ENCODE measurements at regions of chr1 and their contacts with region 1.

Region 1: GRCh38 chr1:26889551-26890466 is at the start of gene GPN2:
- DNase-seq: peak; percentile 71 to 75
- ATAC-seq: peak; percentile 94 to 96
- H3K4me3 ChIP-seq: peak within 1 kb of the TSS; percentile 88
- H3K27ac ChIP-seq: peak within 1 kb of the TSS; percentile 88 to 90
- H3K4me1 ChIP-seq: peaks cover 9% of the 10 kb centered on the region; the same call in 2 of the 3 replicates
- CTCF ChIP-seq: no peak
- EP300 ChIP-seq: no peak
- POLR2A ChIP-seq: peak; percentile 46
- RAD21 ChIP-seq: no peak
- polyA plus RNA-seq, gene GPN2: 18.1 and 23.6 TPM in 2 replicates

Region 2: GRCh38 chr1:26811057-26811456 is 78.8 kb before region 1 on chr1:
- CTCF ChIA-PET with region 1: interaction called, 10 read pairs
- POLR2A ChIA-PET with region 1: no interaction called
- DNase-seq: no peak
- ATAC-seq: no peak
- H3K4me3 ChIP-seq: no peak overlapping the region
- H3K27ac ChIP-seq: no peak overlapping the region; a peak in 1 of 6 replicates
- H3K4me1 ChIP-seq: no peaks in the 10 kb centered on the region; the same call in 2 of the 3 replicates
- CTCF ChIP-seq: no peak
- EP300 ChIP-seq: no peak
- POLR2A ChIP-seq: no peak
- RAD21 ChIP-seq: no peak

Region 3: DNA sequence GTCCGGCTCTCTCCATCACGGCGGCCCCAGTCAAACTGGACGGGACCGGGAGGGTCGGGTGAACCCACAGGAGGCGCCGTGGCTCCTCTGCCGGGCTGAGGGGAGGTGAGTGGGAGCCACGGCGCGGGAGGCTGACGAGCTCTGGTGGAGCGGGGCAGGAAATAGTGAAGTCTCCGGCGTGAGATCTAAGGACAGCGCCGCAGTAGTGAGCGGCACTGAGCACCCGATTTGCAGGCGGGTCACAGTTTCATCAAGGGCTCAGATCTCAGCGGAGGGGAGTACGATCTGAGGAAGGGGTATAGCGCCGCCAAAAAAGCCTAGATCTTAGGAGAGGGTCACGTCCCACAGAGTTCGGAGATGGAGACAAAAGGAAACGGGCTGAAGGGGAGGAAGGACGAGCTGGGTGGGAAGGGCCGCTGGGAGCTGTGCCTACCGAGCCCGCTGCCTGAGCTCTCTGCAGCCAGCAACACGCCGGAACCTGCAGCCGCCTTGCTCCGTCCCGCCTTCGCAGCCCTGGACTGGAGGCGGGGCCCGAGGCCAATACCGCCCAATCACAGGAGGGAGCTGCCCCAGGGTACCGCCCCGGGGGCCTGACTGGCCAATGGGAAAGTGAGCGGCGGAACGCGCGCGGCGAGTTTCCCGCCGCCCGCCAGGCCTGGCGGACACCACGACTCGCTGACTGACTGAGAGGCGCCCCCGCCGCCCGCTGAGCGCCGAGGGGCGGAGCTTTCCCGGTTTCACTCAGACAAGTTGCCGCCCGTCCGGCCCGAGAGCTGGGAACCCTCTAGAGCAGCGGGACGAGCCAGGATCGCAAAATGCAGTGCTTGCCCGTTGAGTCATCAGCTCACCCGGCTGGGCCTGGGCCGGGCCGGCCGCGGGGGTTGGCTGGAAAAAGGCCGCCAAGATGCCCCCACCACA is 24.9 kb before region 1 on chr1:
- CTCF ChIA-PET with region 1: interaction called, 7 read pairs
- POLR2A ChIA-PET with region 1: interaction called, 10 read pairs
- DNase-seq: peak; percentile 65 to 96
- ATAC-seq: peak; percentile 76 to 89
- H3K4me3 ChIP-seq: peak overlapping the region; percentile 66
- H3K27ac ChIP-seq: peak overlapping the region; percentile 99 to 100
- H3K4me1 ChIP-seq: peaks cover 30% of the 10 kb centered on the region
- CTCF ChIP-seq: no peak
- EP300 ChIP-seq: no peak
- POLR2A ChIP-seq: peak; percentile 98
- RAD21 ChIP-seq: no peak

Region 4: GRCh38 chr1:26874896-26875295 is 14.9 kb before region 1 on chr1:
- CTCF ChIA-PET with region 1: interaction called, 11 read pairs
- POLR2A ChIA-PET with region 1: interaction called, 3 read pairs
- DNase-seq: no peak
- ATAC-seq: no peak
- H3K4me3 ChIP-seq: no peak overlapping the region
- H3K27ac ChIP-seq: no peak overlapping the region
- H3K4me1 ChIP-seq: no peaks in the 10 kb centered on the region
- CTCF ChIP-seq: no peak
- EP300 ChIP-seq: no peak
- POLR2A ChIP-seq: no peak
- RAD21 ChIP-seq: no peak

Region 5: DNA sequence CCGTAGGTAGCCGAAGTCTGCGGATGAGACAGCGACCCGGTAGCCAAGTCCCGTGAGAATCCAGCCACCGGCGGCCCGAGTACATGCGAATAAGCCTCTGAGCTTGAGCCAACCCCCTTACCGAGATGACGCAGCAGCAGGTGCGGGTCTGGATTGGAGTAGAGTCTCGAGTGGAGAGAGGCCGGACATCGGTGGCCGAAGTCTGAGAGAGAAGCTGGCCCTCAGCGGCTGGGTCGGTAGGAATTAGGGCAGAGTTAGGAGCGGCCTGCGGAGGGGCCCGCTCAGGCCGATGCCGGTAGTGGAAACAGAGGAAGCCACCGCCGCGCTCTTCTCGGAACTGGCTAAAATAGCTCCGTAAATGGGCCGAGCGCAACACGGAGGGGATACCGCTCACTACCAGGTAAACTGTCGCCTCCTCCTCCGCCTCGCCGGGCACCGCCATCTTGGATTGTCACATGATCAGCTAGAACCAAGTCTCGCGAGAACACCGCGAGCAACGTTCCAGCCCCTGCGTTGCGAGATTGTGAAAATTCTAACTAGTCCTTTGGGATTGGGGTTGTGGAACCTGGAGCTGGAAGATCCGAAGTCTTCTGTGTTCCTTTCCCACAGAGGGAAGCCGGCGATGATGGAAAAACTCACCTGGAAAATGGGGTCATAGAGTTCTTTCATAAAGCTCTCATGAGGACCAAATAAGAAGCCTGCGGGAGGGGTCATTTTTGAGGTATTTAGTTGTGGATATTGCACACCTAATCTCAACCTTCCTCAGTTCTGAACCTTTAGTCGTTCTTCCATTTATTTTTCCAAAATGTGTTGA is 10.4 kb after region 1 on chr1 and contains the start of gene GPATCH3:
- CTCF ChIA-PET with region 1: interaction called, 9 read pairs
- POLR2A ChIA-PET with region 1: interaction called, 14 read pairs
- DNase-seq: peak; percentile 86 to 91
- ATAC-seq: peak; percentile 92 to 95
- H3K4me3 ChIP-seq: peak within 1 kb of the TSS; percentile 91
- H3K27ac ChIP-seq: peak within 1 kb of the TSS; percentile 79 to 91
- H3K4me1 ChIP-seq: peaks cover 5% of the 10 kb centered on the region; the same call in 1 of the 3 replicates
- CTCF ChIP-seq: no peak
- EP300 ChIP-seq: no peak
- POLR2A ChIP-seq: peak; percentile 81
- RAD21 ChIP-seq: no peak
- polyA plus RNA-seq, gene GPATCH3: 4.9 and 5.4 TPM in 2 replicates

Region 6: DNA sequence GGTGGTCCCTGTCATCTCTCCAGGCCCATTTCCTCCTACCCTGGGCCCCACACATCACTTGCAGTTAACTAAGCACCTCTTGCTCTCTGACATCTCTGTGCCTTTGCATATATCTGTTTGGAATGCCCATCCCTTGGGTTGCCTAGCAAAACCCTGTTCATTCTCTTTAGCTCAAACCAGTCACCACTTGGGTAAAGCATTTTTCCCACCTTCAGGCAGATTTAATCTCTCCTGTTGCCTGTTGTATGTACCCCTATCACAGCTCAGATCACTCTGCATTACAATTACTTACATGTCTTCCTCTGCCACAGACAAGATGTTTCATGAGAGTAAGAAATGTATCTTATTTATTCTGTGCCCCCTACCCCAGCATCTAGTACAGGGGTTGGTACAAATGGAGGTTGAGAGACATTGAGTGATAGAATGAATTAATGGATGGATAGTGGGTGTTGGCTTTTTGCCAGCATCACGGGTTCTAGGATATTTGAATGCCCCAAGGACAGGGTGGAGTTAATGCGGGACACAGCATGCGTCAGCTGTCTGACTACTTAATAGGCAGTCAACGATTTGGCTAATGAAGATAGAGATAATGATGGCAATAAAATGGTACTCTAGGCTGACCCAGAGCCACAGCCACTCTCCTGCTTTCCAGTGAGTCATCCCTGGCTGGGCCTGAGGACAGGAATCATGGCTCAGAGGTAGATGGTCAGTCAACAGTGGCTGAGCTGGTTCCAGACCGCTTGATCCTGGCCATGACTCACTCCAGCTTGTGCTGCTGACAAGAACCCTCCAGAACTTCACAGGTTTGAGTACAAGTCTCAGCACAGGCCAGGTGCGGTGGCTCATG is 17.5 kb after region 1 on chr1:
- CTCF ChIA-PET with region 1: interaction called, 3 read pairs
- POLR2A ChIA-PET with region 1: interaction called, 10 read pairs
- DNase-seq: peak; percentile 60 to 63
- ATAC-seq: peak; percentile 89 to 92
- H3K4me3 ChIP-seq: no peak overlapping the region
- H3K27ac ChIP-seq: 0 out of 6 replicates have a peak overlapping the region, but pooled peaks of 1 of the 2 experiments have one; percentile 37
- H3K4me1 ChIP-seq: peaks cover 14% of the 10 kb centered on the region; the same call in 2 of the 3 replicates
- CTCF ChIP-seq: no peak
- EP300 ChIP-seq: no peak
- POLR2A ChIP-seq: no peak
- RAD21 ChIP-seq: no peak

Region 7: DNA sequence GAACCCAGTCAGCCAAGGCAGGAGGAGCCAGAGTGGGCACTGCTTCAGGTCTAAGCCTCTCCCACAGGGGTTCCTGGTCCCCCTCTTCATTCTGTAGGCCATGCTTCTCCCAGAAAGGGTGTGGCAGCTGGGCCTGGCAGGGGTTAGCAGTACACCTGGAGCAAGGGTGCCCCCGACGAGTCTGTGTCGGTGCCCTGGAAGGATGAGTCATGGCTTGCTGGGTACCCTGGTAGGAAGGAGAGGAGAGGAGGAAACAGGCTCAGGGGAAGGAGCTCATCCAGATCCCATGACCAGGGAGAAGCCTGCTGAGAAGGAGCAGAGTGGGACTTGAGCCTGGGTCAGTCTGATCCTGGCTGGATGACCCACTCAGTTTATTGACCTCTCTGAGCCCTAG is 60.1 kb after region 1 on chr1:
- CTCF ChIA-PET with region 1: no interaction called
- POLR2A ChIA-PET with region 1: no interaction called
- DNase-seq: no peak
- ATAC-seq: peak; percentile 17 to 46; a peak in 5 of 6 replicates
- H3K4me3 ChIP-seq: no peak overlapping the region
- H3K27ac ChIP-seq: 0 out of 6 replicates have a peak overlapping the region, but pooled peaks of 1 of the 2 experiments have one; percentile 16
- H3K4me1 ChIP-seq: no peaks in the 10 kb centered on the region; the same call in 2 of the 3 replicates
- CTCF ChIP-seq: no peak
- EP300 ChIP-seq: no peak
- POLR2A ChIP-seq: no peak
- RAD21 ChIP-seq: no peak

Region 8: DNA sequence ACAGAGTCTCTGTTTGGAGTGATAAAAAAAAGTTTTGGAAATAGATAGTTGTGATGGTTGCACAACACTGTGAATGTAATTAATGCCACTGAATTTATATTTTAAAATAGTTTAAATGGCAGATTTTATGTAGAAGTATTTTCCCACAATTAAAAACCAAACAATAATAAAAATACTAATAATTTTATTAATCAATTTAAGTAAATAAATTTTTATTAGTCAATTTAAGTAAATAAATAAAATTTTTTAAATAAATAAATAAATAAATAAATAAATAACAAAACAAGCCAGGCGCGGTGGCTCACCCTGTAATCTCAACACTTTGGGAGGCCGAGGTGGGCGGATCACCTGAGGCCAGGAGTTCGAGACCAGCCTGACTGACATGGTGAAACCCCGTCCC is 75.4 kb after region 1 on chr1:
- CTCF ChIA-PET with region 1: interaction called, 11 read pairs
- POLR2A ChIA-PET with region 1: no interaction called
- DNase-seq: no peak
- ATAC-seq: no peak
- H3K4me3 ChIP-seq: no peak overlapping the region
- H3K27ac ChIP-seq: no peak overlapping the region; a peak in 1 of 6 replicates
- H3K4me1 ChIP-seq: peaks cover 39% of the 10 kb centered on the region
- CTCF ChIP-seq: no peak
- EP300 ChIP-seq: no peak
- POLR2A ChIP-seq: no peak
- RAD21 ChIP-seq: no peak

Measured in A549 (cell line).